ENCODE measurements at regions of chr22 and their contacts with region 1.

Region 1: GRCh38 chr22:21001560-21002325 is at the start of gene THAP7:
- DNase-seq: peak; percentile 65 to 95
- H3K4me3 ChIP-seq: peak within 1 kb of the TSS; percentile 64 to 99 (median 83)
- H3K27ac ChIP-seq: peak within 1 kb of the TSS; percentile 74; the same call in 1 of the 2 replicates
- H3K4me1 ChIP-seq: peaks cover 0 to 12% (median 8%) of the 10 kb centered on the region in 4 experiments; a peak in 5 of 7 replicates
- H3K27me3 ChIP-seq: no peaks in the 10 kb centered on the region
- CTCF ChIP-seq: no peak
- EP300 ChIP-seq: no peak
- POLR2A ChIP-seq: peak; percentile 64 to 73
- RAD21 ChIP-seq: no peak
- total RNA-seq, gene THAP7: 16.2 and 16.9 TPM in 2 replicates

Region 2: DNA sequence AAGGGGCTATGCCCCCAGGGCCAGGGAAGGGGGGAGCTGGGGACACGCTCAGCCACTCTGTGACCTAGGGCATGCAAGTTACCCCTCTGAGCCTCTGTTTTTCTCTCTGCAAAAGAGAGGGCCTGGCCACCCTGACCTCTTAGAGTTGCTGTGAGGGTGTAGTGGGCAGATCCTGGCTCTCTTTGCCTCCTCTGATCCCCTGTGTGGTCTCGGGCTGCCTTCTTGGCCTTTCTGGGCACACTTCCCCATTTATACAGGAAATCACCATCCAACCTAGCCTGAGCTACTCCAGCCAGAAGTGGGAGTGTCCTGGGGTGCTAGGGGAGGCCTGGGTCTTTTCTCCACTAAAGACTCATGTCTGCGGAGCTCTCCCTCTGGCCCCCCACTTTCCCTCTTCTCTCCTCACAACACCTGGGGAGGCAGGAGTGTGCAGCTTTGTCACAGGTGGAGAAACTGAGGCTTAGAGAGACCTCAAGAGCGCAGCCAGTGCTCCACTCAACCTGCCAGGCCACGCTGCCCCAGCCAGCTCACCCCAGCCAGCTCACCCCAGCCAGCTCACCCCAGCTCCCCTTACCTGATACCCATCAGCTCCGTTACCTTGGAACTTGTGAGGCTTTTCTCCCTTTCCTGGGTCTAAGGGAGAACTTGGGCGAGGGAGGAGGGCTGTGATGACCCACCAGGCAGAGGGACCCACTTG is 33.3 kb before region 1 on chr22:
- CTCF ChIA-PET with region 1: interaction called, 13 read pairs
- POLR2A ChIA-PET with region 1: interaction called, 3 read pairs
- DNase-seq: peak in 1 of 2 experiments; percentile 54
- H3K4me3 ChIP-seq: peak overlapping the region in 1 of 4 experiments; percentile 39; a peak in 2 of 8 replicates
- H3K27ac ChIP-seq: no peak overlapping the region
- H3K4me1 ChIP-seq: peaks cover 0 to 19% (median 13%) of the 10 kb centered on the region in 4 experiments; a peak in 6 of 7 replicates
- H3K27me3 ChIP-seq: peaks cover 31 to 64% (median 50%) of the 10 kb centered on the region in 4 experiments
- CTCF ChIP-seq: no peak
- EP300 ChIP-seq: no peak
- POLR2A ChIP-seq: no peak
- RAD21 ChIP-seq: no peak

Region 3: GRCh38 chr22:20981787-20982562 is 19.8 kb before region 1 on chr22 and contains the start of gene LZTR1:
- CTCF ChIA-PET with region 1: interaction called, 5 read pairs
- POLR2A ChIA-PET with region 1: interaction called, 45 read pairs
- DNase-seq: peak in 1 of 2 experiments; percentile 86
- H3K4me3 ChIP-seq: peak within 1 kb of the TSS; percentile 68 to 86 (median 74)
- H3K27ac ChIP-seq: peak within 1 kb of the TSS; percentile 90
- H3K4me1 ChIP-seq: peaks cover 5 to 25% (median 8%) of the 10 kb centered on the region in 4 experiments; a peak in 6 of 7 replicates
- H3K27me3 ChIP-seq: peaks cover 0 to 14% (median 7%) of the 10 kb centered on the region in 4 experiments; a peak in 5 of 7 replicates
- CTCF ChIP-seq: peak; percentile 62 to 69 (median 65)
- EP300 ChIP-seq: no peak; a peak in 1 of 3 replicates
- POLR2A ChIP-seq: peak in 1 of 2 experiments; percentile 96; a peak in 2 of 3 replicates
- RAD21 ChIP-seq: peak; percentile 42 to 53
- total RNA-seq, gene LZTR1: 29.8 and 31.0 TPM in 2 replicates

Region 4: GRCh38 chr22:20989323-20990138 is 12.2 kb before region 1 on chr22:
- CTCF ChIA-PET with region 1: interaction called, 5 read pairs
- POLR2A ChIA-PET with region 1: interaction called, 17 read pairs
- DNase-seq: no peak
- H3K4me3 ChIP-seq: no peak overlapping the region
- H3K27ac ChIP-seq: no peak overlapping the region
- H3K4me1 ChIP-seq: no peaks in the 10 kb centered on the region; a peak in 1 of 7 replicates
- H3K27me3 ChIP-seq: no peaks in the 10 kb centered on the region
- CTCF ChIP-seq: no peak
- EP300 ChIP-seq: no peak
- POLR2A ChIP-seq: no peak
- RAD21 ChIP-seq: no peak

Region 5: GRCh38 chr22:21012446-21013407 is 11.0 kb after region 1 on chr22:
- CTCF ChIA-PET with region 1: interaction called, 6 read pairs
- POLR2A ChIA-PET with region 1: interaction called, 10 read pairs
- DNase-seq: no peak
- H3K4me3 ChIP-seq: peak overlapping the region in 2 of 4 experiments; percentile 51 to 67; a peak in 3 of 8 replicates
- H3K27ac ChIP-seq: no peak overlapping the region
- H3K4me1 ChIP-seq: peaks cover 15 to 31% (median 19%) of the 10 kb centered on the region in 4 experiments
- H3K27me3 ChIP-seq: peaks cover 0 to 4% (median 3%) of the 10 kb centered on the region in 4 experiments; a peak in 4 of 7 replicates
- CTCF ChIP-seq: no peak
- EP300 ChIP-seq: no peak
- POLR2A ChIP-seq: no peak
- RAD21 ChIP-seq: no peak

Region 6: GRCh38 chr22:21020802-21021429 is 19.2 kb after region 1 on chr22:
- CTCF ChIA-PET with region 1: interaction called, 11 read pairs
- POLR2A ChIA-PET with region 1: interaction called, 4 read pairs
- DNase-seq: peak in 1 of 2 experiments; percentile 73
- H3K4me3 ChIP-seq: no peak overlapping the region
- H3K27ac ChIP-seq: no peak overlapping the region
- H3K4me1 ChIP-seq: no peaks in the 10 kb centered on the region
- H3K27me3 ChIP-seq: no peaks in the 10 kb centered on the region; a peak in 1 of 7 replicates
- CTCF ChIP-seq: peak; percentile 70 to 80 (median 74)
- EP300 ChIP-seq: no peak
- POLR2A ChIP-seq: no peak
- RAD21 ChIP-seq: peak; percentile 71 to 73

Measured in H1 (cell line).